T-cell (primary cell): ENCODE measurements at regions of chr20 and their contacts with region 1.

Region 1: GRCh38 chr20:16528078-16528477 is 45.2 kb downstream of the KIF16B start:
- DNase-seq: no peak
- ATAC-seq: no peak
- H3K4me3 ChIP-seq: no peak overlapping the region
- H3K4me3 Mint-ChIP-seq: no peak overlapping the region
- H3K27ac ChIP-seq: no peak overlapping the region
- H3K27ac Mint-ChIP-seq: no peak overlapping the region
- H3K4me1 ChIP-seq: no peaks in the 10 kb centered on the region
- H3K4me1 Mint-ChIP-seq: no peaks in the 10 kb centered on the region
- H3K27me3 ChIP-seq: no peaks in the 10 kb centered on the region
- H3K27me3 Mint-ChIP-seq: no peaks in the 10 kb centered on the region

Region 2: DNA sequence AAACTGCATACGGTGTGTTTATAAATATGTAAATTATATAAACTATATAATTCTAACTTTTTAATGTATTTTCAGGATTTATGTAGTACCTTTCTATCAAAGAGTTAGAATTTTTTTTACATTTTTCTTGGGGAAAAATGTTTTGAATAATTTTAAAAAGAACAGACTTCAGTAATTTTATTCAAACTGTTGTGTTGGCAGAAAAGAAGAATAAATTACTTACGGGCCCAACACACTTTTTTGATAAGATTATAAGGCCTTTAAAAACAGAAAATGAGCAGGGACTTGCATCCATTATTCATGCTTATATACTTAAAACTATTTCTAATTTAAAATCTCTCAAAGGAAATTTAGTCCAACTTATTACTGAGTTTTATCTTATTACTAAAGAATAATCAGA is 13.0 kb before region 1 on chr20:
- CTCF ChIA-PET with region 1: interaction called in 1 of 2 experiments, 3 read pairs
- POLR2A ChIA-PET with region 1: interaction called in 1 of 2 experiments, 10 read pairs
- DNase-seq: no peak
- ATAC-seq: no peak
- H3K4me3 ChIP-seq: no peak overlapping the region
- H3K4me3 Mint-ChIP-seq: no peak overlapping the region
- H3K27ac ChIP-seq: no peak overlapping the region
- H3K27ac Mint-ChIP-seq: no peak overlapping the region
- H3K4me1 ChIP-seq: no peaks in the 10 kb centered on the region
- H3K4me1 Mint-ChIP-seq: no peaks in the 10 kb centered on the region
- H3K27me3 ChIP-seq: no peaks in the 10 kb centered on the region
- H3K27me3 Mint-ChIP-seq: no peaks in the 10 kb centered on the region